ENCODE measurements at regions of chr19 and their contacts with region 1.

Region 1: DNA sequence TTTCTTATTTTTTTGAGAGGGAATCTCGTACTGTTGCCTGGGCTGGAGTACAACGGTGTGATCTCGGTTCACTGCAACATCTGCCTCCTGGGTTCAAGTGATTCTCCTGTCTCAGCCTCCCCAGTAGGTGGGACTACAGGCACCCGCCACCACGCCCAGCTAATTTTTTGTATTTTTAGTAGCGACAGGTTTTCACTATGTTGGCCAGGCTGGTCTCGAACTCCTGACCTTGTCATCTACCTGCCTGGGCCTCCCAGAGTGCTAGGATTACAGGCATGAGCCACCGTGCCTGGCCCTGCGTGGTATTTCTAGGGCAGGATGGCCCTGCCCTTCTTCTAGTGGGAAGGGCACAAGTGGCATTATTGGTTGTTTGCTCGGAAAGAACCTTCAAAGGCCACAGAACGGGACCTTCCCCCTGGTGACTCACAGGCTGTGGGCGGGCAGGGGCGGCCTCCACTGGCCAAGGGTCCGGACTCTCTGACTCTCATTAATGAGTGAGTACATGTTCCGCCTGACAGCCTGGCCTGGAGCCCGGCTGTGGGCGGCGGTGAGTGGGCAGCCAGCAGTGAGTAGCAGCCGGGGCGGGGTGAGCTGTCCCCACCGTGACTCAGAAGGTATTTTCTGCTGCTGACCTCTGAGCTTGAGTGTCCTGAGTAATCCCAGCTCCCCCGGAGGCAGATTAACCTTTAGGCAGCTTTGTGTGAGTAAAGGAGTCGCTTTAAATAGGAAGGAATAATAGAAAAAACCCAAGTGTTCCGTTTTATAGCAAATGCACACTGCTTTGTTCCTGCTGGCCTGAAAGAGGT is 5.1 kb downstream of the DOT1L start:
- DNase-seq: peak; percentile 86
- CTCF ChIP-seq: peak; percentile 17

Region 2: GRCh38 chr19:2391118-2391725 is 222.4 kb after region 1 on chr19:
- in situ Hi-C with region 1: loop called (anchors 10 kb)
- DNase-seq: peak; percentile 76
- CTCF ChIP-seq: peak; percentile 80